ENCODE measurements at regions of chr5 and their contacts with region 1.

Region 1: GRCh38 chr5:169318556-169318955 is 17.6 kb upstream of the SLIT3 start:
- DNase-seq: no peak
- H3K4me3 Mint-ChIP-seq: no peak overlapping the region
- H3K27ac Mint-ChIP-seq: no peak overlapping the region
- H3K4me1 Mint-ChIP-seq: no peaks in the 10 kb centered on the region
- H3K27me3 Mint-ChIP-seq: no peaks in the 10 kb centered on the region
- CTCF ChIP-seq: no peak

Region 2: GRCh38 chr5:169511708-169512107 is 193.2 kb after region 1 on chr5:
- CTCF ChIA-PET with region 1: no interaction called
- POLR2A ChIA-PET with region 1: no interaction called
- intact Hi-C with region 1: loop called (anchors 10 kb)
- DNase-seq: no peak
- H3K4me3 Mint-ChIP-seq: no peak overlapping the region
- H3K27ac Mint-ChIP-seq: no peak overlapping the region
- H3K4me1 Mint-ChIP-seq: no peaks in the 10 kb centered on the region
- H3K27me3 Mint-ChIP-seq: no peaks in the 10 kb centered on the region
- CTCF ChIP-seq: no peak

Measured in MCF 10A (cell line).